Activated CD4-positive, alpha-beta T cell treated with anti-CD3 and anti-CD28 coated beads, Interleukin-2, amount 10 ng/mL, durations not matched to agents 24 days and 14 days (primary cell): ENCODE measurements at regions of chr16 and their contacts with region 1.

Region 1: GRCh38 chr16:75148311-75149195 is at the start of gene ZFP1:
- DNase-seq: peak; percentile 98
- H3K4me3 Mint-ChIP-seq: peak within 1 kb of the TSS; percentile 92
- H3K27ac Mint-ChIP-seq: peak within 1 kb of the TSS; percentile 87
- H3K4me1 Mint-ChIP-seq: peaks cover 19% of the 10 kb centered on the region
- H3K27me3 Mint-ChIP-seq: no peaks in the 10 kb centered on the region
- total RNA-seq, gene ZFP1: 14.3 and 16.5 TPM in 2 replicates

Region 2: DNA sequence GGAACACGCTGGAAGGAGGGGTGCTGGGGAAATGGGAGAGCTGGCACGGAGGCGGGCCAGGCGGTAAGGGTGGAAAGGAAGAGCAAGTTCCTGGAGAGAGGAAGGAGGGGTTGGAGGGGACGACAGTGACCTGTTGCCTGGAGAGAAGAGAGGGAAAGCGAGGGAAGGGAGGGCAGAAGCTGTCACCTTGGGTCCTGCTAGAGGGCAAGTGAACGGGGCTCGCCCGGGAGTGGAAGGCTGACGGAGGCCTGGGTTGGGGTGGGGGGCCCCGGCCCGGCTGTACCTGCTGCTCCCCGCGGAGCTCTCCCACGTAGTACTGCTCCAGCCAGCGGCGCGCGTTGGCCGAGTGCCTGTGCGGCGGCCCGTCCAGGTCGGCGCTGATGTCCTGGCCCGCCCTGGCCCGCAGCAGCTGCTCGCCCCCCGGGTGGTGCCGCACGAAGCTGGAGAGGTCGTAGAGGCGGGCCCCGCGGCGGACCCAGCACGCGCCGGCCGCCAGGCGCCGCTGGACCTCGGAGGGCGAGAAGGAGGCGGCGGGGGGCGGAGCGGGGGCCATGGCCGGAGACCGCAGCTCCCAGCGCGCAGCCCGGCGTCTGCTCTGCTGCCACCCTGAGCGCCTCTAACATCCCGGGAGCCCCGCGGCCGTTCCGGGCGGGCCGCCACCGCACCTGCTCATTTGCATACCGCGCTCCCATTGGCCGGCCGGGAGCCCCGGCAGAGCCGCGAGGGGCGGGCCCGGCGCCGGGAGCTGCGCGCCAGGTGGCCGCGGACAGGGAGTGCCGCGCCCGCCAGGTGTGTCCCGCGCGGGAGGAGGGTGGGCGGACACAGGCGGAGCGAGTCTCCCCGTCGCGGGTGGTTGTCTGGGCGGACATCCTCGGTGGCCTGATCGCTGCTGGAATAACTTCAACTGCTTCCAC is 374.1 kb before region 1 on chr16 and contains the start of gene FA2H:
- intact Hi-C with region 1: no loop called
- DNase-seq: peak; percentile 92
- H3K4me3 Mint-ChIP-seq: peak within 1 kb of the TSS; percentile 76
- H3K27ac Mint-ChIP-seq: peak within 1 kb of the TSS; percentile 44
- H3K4me1 Mint-ChIP-seq: peaks cover 9% of the 10 kb centered on the region
- H3K27me3 Mint-ChIP-seq: peaks cover 35% of the 10 kb centered on the region
- total RNA-seq, gene FA2H: not detected in 2 replicates

Region 3: GRCh38 chr16:74852500-74852875 is 296.1 kb before region 1 on chr16:
- intact Hi-C with region 1: no loop called
- DNase-seq: no peak
- H3K4me3 Mint-ChIP-seq: no peak overlapping the region
- H3K27ac Mint-ChIP-seq: no peak overlapping the region
- H3K4me1 Mint-ChIP-seq: no peaks in the 10 kb centered on the region
- H3K27me3 Mint-ChIP-seq: no peaks in the 10 kb centered on the region

Region 4: GRCh38 chr16:74984535-74985296 is 163.8 kb before region 1 on chr16 and contains the start of gene WDR59:
- intact Hi-C with region 1: loop called (anchors 1 kb)
- DNase-seq: peak; percentile 100
- H3K4me3 Mint-ChIP-seq: peak within 1 kb of the TSS; percentile 94
- H3K27ac Mint-ChIP-seq: peak within 1 kb of the TSS; percentile 95
- H3K4me1 Mint-ChIP-seq: peaks cover 16% of the 10 kb centered on the region
- H3K27me3 Mint-ChIP-seq: no peaks in the 10 kb centered on the region
- total RNA-seq, gene WDR59: 80.6 and 91.5 TPM in 2 replicates

Region 5: GRCh38 chr16:75099756-75100602 is 48.6 kb before region 1 on chr16:
- intact Hi-C with region 1: no loop called
- DNase-seq: peak; percentile 86
- H3K4me3 Mint-ChIP-seq: peak overlapping the region; percentile 74
- H3K27ac Mint-ChIP-seq: peak overlapping the region; percentile 95
- H3K4me1 Mint-ChIP-seq: peaks cover 63% of the 10 kb centered on the region
- H3K27me3 Mint-ChIP-seq: no peaks in the 10 kb centered on the region